GM10248 (cell line): ENCODE measurements at regions of chr11 and their contacts with region 1.

Region 1: DNA sequence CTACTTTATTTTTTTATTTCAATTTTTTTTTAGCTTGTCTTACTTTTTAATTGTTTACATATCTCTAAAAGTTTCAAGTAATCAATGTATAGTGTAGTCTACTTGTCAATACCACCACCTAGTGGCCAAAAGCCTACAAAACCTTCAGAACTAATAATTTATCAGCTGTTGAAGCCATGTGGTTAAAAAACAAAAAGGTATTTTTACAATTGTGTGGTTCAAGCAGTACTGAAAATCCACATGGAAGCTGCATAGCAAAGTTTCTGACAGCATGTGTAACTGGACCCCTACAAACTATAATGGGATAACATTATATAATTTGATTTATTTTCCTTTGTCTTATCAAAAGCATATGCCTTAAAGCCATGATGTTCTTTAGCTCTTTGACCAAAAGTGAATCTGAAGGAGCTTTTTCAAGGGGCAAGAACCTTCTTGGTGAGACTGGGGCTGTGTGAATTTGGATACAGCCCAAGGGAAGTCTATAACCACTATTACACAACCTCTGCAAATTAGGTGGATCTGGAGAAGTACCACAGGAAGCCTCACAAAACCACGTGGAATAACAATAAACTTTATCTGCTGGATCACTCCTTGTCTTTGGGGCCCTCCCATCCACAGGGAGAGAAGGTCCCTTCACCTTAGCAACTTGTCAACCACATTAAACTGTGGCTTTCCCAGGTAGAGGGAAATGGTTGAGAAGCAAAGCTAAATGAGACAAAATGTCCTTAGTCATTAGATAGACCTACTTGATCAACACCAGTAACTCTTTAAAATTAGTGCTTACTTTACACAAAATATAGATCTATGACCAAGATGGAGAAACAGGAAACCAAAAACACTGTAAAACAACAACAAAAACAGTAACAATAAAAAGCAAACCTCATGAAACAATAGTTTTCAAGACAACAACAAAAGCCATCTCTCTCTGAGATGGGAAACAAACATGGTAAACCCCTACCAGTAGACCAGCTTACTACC is 9.9 kb downstream of the NARS2 start:
- DNase-seq: no peak
- CTCF ChIP-seq: peak; percentile 63

Region 2: DNA sequence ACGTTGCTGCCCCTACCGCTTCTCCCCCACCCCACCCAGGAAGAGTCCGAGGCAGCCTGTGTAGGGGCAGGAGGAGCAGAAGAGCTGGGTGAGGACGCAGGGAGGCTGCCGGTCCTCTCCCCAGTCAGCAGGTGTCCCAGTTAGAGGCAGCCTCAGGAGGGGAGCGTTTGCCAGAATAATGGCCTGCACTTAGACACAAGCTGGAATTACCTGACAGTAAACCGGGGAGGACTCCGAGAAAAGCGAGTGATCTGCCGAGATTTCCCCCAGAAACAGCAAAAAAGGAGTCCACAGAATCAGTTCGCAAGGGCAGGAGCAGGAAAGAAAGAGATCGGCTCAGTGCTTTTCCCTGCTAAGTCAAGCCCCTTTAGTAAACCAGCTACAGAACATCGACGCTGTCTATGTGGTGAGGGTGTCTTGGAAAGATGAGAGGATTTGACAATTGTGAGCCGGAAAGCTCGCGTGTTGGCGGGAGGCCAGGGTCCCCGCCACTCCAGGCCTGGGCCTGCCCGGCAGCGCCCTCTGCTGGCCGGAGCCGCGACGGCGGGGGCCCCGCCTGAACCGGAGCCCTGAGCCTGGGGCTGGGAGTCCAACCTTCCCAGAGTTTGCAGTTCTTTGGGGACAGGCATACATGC is 518.8 kb before region 1 on chr11:
- CTCF ChIA-PET with region 1: interaction called, 15 read pairs
- POLR2A ChIA-PET with region 1: no interaction called
- DNase-seq: peak; percentile 89
- CTCF ChIP-seq: peak; percentile 96

Region 3: GRCh38 chr11:78228467-78228866 is 336.3 kb before region 1 on chr11:
- CTCF ChIA-PET with region 1: interaction called, 89 read pairs
- POLR2A ChIA-PET with region 1: interaction called, 10 read pairs
- DNase-seq: peak; percentile 75
- CTCF ChIP-seq: peak; percentile 60

Region 4: GRCh38 chr11:78350646-78351165 is 214.1 kb before region 1 on chr11:
- CTCF ChIA-PET with region 1: interaction called, 11 read pairs
- POLR2A ChIA-PET with region 1: no interaction called
- DNase-seq: no peak
- CTCF ChIP-seq: no peak

Region 5: GRCh38 chr11:78432058-78432515 is 132.7 kb before region 1 on chr11:
- CTCF ChIA-PET with region 1: interaction called, 20 read pairs
- POLR2A ChIA-PET with region 1: no interaction called
- DNase-seq: no peak
- CTCF ChIP-seq: peak; percentile 32

Region 6: DNA sequence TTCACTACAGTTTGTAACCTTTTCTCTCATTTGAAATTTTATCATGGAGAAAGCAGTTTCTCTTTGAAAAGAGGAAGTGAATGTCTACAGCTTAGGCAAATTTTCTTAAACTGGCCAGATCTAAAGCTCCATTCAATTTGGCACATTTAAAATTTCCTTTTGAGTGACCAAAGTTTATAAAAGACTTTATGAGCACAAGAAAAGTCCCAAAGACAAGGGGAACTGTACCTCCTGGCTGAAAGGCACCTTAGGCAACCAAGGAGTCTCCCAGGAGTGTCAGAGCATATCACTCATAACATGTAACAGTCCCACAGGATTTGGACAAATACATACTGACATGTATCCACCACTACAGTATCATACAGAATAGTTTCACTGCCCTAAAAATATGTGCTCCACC is 31.4 kb before region 1 on chr11:
- CTCF ChIA-PET with region 1: interaction called, 11 read pairs
- POLR2A ChIA-PET with region 1: no interaction called
- DNase-seq: peak; percentile 30
- CTCF ChIP-seq: no peak

Region 7: DNA sequence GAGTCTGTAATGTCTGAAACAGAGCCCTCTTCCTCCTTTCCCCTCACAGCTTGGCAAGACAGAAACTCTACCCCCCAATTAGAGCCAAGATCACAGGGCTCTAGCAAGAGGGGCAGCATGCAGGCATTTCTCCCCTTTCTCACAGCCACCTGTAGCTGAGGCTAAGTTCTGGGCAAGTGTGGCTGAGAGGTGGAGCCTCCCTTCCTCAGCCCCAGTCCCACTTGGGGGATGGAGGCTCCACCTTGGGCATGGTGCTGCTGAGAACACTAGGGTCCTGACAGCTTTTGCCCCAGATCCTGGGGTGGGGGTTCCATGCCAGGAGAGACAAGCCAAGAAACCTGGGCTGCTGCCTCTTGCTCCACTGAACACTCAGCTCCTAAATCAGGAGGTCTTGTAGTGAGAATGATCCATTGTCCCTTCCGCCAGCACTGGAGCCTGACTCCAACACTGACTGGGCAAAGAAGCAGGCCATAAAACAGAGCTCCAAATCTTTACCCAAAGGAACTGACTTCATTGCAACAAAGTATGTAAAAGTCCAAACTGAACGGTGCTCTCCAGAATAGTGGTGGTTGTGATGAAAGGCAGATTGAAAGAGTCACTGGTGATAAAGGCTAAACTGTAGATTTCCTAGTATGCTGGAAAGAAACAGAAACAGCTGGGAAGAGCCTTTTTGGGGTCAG is 15.7 kb before region 1 on chr11:
- CTCF ChIA-PET with region 1: interaction called, 40 read pairs
- POLR2A ChIA-PET with region 1: no interaction called
- DNase-seq: no peak
- CTCF ChIP-seq: no peak